ENCODE measurements at regions of chr19 and their contacts with region 1.

Region 1: GRCh38 chr19:51593969-51594773 is 23.1 kb downstream of the ZNF175 start:
- DNase-seq: peak; percentile 99
- H3K4me3 ChIP-seq: peak overlapping the region; percentile 67 to 74 (median 70)
- H3K27ac ChIP-seq: peak overlapping the region; percentile 48 to 69 (median 61)
- H3K4me1 ChIP-seq: peaks cover 15 to 22% (median 20%) of the 10 kb centered on the region in 4 donors
- H3K27me3 ChIP-seq: peaks cover 0 to 21% (median 0%) of the 10 kb centered on the region in 4 donors
- CTCF ChIP-seq: no peak
- EP300 ChIP-seq: no peak
- POLR2A ChIP-seq: no peak

Region 2: DNA sequence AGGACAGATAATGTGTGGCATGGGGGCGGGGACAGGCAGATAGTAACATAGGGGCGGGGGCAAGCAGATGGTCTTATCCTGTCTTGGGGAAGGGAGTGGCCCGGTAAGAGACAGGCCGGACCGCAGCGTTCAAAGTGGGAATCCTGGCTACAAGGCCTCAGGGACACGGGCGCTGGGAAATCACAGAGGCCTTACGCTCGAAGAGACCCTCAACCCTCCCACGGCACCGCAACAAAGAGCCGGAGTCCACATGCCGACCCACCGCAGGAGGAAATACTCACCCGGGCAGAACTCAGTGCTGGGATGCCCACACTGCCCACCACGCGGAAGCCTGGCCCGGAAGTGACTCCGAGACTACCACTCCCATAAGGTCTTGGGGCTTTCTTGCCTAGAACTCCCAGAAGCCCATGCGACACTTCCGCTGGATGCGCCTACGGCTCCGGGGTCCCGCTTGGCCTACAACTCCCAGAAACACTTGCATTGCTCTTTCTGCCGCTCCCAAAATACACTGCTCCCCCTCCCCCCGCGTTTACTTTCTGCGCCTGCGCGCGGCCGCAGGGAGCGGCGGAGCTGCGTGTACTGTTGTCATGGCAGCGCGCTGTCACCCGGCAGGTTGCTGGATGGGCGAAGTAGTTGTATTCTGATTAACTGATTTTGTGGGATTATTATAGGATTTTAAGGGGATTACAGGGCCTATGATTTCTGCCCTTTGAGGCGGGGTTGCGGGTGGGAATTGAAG is 485.9 kb before region 1 on chr19 and contains the start of gene CTU1:
- intact Hi-C with region 1: loop called (anchors 5 kb)
- DNase-seq: peak; percentile 99
- H3K4me3 ChIP-seq: peak within 1 kb of the TSS; percentile 65 to 89 (median 76)
- H3K27ac ChIP-seq: peak within 1 kb of the TSS; percentile 68 to 77 (median 69)
- H3K4me1 ChIP-seq: peaks cover 13 to 36% (median 19%) of the 10 kb centered on the region in 4 donors
- H3K27me3 ChIP-seq: peaks cover 0 to 5% (median 0%) of the 10 kb centered on the region in 4 donors
- CTCF ChIP-seq: peak in 2 of 3 experiments; percentile 31
- EP300 ChIP-seq: no peak
- POLR2A ChIP-seq: no peak
- total RNA-seq, gene CTU1: 7.1 to 18.9 (median 13.7) TPM

Region 3: DNA sequence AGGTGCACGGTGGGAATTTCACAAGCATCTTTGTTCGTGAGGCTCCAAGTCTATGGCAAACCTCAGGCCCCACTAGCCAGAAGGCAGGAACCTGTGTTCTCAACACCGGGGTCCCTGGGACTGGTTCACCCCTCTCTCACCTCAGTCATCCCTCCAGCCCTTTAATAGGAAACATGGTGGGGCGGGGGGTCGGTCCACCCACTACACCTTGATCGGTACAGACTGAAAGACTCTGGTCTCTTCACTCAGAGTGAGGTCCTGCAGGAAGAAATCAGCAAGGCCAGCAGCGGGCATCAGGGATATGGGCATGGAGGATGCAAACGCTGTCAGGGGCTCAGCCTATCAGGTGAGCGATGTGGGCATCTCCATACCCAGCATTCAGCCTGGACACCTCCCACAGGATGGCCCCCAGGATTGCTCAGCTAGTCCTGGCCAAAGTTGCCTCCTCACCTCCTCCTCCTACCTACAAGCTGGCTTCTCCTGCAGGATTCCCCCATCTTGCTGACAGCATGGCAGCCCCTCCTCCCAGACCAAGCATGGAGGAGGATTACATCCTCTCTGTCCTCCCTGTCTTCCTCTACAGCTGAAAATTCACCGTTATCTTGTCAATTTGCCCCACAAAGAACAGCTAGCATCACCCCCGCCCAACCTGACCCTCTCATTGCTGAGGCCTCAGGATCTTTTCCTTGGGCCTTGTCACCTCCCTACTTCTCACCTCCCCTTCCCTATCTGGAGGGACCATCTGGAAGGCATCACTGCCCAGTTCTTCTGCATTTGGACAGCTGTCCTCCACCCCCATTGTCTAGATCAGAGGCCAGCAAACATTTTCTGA is 406.6 kb before region 1 on chr19:
- intact Hi-C with region 1: no loop called
- DNase-seq: no peak
- H3K4me3 ChIP-seq: no peak overlapping the region
- H3K27ac ChIP-seq: no peak overlapping the region
- H3K4me1 ChIP-seq: no peaks in the 10 kb centered on the region
- H3K27me3 ChIP-seq: peaks cover 0 to 53% (median 0%) of the 10 kb centered on the region in 4 donors
- CTCF ChIP-seq: no peak
- EP300 ChIP-seq: no peak
- POLR2A ChIP-seq: no peak

Region 4: GRCh38 chr19:51572908-51573307 is 21.3 kb before region 1 on chr19:
- intact Hi-C with region 1: loop called (anchors 2 kb)
- DNase-seq: no peak
- H3K4me3 ChIP-seq: no peak overlapping the region
- H3K27ac ChIP-seq: no peak overlapping the region
- H3K4me1 ChIP-seq: peaks cover 15 to 18% (median 17%) of the 10 kb centered on the region in 4 donors
- H3K27me3 ChIP-seq: no peaks in the 10 kb centered on the region
- CTCF ChIP-seq: no peak
- EP300 ChIP-seq: no peak
- POLR2A ChIP-seq: no peak